ENCODE measurements at regions of chr11 and their contacts with region 1.

Region 1: DNA sequence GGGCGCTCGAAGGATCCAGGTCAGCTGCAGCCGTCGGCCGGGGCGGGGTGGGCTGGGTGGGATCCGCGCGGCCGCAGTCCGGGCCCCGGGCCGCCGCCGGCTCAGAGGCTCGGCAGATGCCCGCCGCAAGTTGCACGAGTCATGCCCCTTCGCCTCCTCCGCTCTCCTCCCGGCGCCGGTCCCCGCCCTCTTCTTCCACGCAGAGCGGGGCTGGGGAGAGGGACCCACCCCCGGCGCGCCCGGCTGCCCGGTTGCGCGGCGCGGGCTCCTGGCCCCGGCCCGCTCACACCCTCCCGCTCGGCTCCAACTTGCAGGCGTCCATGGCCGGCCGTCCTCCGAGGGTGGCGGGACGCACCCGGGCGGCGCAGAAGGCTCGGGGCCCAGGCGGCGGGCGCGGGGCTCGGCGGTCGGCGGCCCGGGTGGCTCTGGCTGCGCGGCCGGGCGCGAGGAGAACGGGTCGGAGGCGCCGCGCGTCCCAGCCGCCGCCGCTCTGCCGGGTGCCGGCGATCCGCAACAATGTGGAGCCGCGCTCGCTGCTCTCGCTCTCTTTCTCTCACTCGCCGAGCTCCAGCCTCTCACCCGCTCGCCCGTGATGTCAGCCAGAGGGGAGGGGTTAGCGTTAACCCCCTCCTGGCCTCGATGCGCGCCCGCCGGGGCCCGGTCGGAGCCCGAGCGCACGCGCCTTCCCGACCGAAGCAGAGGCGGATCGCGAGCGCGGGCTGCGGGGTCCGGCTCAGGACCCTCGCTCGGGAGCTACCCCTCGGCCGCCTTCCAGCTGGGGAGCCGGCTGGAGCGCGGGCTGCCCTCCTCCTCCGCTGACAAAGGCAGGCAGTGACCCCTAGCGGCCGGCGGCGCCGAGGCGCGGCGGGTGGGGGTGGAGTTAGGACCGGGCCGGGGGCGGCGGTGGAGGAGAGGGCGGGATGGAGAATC is at the start of gene NECTIN1:
- DNase-seq: peak; percentile 93
- ATAC-seq: peak; percentile 86
- H3K4me3 Mint-ChIP-seq: peak within 1 kb of the TSS; percentile 94
- H3K27ac Mint-ChIP-seq: peak within 1 kb of the TSS; percentile 79
- H3K4me1 Mint-ChIP-seq: peaks cover 38% of the 10 kb centered on the region
- H3K27me3 Mint-ChIP-seq: peaks cover 20% of the 10 kb centered on the region
- CTCF ChIP-seq: peak; percentile 49
- total RNA-seq, gene NECTIN1: 36.4 and 36.7 TPM in 2 replicates

Region 2: DNA sequence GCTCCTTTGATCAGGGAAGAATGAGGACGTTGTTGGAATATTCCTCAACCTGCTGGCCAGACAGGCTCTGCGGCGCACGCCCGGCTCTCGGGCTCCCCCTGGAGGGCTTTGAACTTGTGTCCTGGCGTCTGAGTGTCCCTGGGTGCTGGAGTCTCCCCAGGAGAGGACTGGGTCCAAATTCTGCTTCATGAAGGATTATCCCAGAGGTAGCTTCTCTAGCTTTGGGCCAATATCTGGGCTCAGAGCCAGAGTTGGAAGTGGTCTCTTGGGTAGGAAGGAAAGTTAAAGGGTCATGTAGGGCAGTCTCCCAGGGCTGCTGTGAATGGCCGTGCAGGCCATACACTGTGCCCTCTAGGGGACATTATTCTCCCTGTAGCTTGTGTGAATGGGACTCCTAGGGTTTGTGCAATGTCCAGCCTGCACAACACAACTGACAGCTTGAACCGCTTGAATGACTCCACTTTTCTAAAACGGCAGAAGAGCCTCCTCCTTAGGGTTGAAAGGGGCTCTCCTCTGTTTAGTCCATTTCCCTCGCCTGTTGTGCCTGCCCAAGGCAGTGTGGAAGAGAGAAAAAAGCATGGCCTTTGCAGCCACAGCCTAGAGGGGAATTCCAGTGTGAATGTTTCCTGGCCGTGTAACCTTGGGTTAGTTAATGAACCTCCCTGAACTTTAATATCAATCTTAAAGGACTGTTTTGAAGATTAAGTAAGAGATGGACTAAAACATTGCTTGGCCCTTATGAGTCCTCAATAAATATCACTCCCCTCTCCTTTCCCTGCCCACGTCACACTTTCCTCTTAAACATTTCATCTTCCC is 194.8 kb before region 1 on chr11:
- CTCF ChIA-PET with region 1: no interaction called
- POLR2A ChIA-PET with region 1: no interaction called
- intact Hi-C with region 1: loop called (anchors 5 kb)
- DNase-seq: peak; percentile 57
- ATAC-seq: peak; percentile 79
- H3K4me3 Mint-ChIP-seq: no peak overlapping the region
- H3K27ac Mint-ChIP-seq: no peak overlapping the region
- H3K4me1 Mint-ChIP-seq: no peaks in the 10 kb centered on the region
- H3K27me3 Mint-ChIP-seq: peaks cover 37% of the 10 kb centered on the region
- CTCF ChIP-seq: peak; percentile 61

Region 3: GRCh38 chr11:119641983-119642745 is 86.8 kb before region 1 on chr11:
- CTCF ChIA-PET with region 1: interaction called, 9 read pairs
- POLR2A ChIA-PET with region 1: no interaction called
- intact Hi-C with region 1: loop called (anchors 1 kb)
- DNase-seq: no peak
- ATAC-seq: no peak
- H3K4me3 Mint-ChIP-seq: no peak overlapping the region
- H3K27ac Mint-ChIP-seq: no peak overlapping the region
- H3K4me1 Mint-ChIP-seq: no peaks in the 10 kb centered on the region
- H3K27me3 Mint-ChIP-seq: peaks cover 6% of the 10 kb centered on the region
- CTCF ChIP-seq: no peak

Region 4: GRCh38 chr11:119673759-119674336 is 55.1 kb before region 1 on chr11:
- CTCF ChIA-PET with region 1: interaction called, 117 read pairs
- POLR2A ChIA-PET with region 1: interaction called, 58 read pairs
- intact Hi-C with region 1: loop called (anchors 1 kb)
- DNase-seq: peak; percentile 66
- ATAC-seq: peak; percentile 92
- H3K4me3 Mint-ChIP-seq: peak overlapping the region; percentile 78
- H3K27ac Mint-ChIP-seq: peak overlapping the region; percentile 91
- H3K4me1 Mint-ChIP-seq: peaks cover 31% of the 10 kb centered on the region
- H3K27me3 Mint-ChIP-seq: no peaks in the 10 kb centered on the region
- CTCF ChIP-seq: no peak

Region 5: GRCh38 chr11:119741369-119742262 is 12.7 kb after region 1 on chr11:
- CTCF ChIA-PET with region 1: interaction called, 12 read pairs
- POLR2A ChIA-PET with region 1: interaction called, 8 read pairs
- intact Hi-C with region 1: loop called (anchors 1 kb)
- DNase-seq: peak; percentile 67
- ATAC-seq: peak; percentile 88
- H3K4me3 Mint-ChIP-seq: peak overlapping the region; percentile 25
- H3K27ac Mint-ChIP-seq: no peak overlapping the region
- H3K4me1 Mint-ChIP-seq: peaks cover 10% of the 10 kb centered on the region
- H3K27me3 Mint-ChIP-seq: peaks cover 51% of the 10 kb centered on the region
- CTCF ChIP-seq: no peak

Region 6: DNA sequence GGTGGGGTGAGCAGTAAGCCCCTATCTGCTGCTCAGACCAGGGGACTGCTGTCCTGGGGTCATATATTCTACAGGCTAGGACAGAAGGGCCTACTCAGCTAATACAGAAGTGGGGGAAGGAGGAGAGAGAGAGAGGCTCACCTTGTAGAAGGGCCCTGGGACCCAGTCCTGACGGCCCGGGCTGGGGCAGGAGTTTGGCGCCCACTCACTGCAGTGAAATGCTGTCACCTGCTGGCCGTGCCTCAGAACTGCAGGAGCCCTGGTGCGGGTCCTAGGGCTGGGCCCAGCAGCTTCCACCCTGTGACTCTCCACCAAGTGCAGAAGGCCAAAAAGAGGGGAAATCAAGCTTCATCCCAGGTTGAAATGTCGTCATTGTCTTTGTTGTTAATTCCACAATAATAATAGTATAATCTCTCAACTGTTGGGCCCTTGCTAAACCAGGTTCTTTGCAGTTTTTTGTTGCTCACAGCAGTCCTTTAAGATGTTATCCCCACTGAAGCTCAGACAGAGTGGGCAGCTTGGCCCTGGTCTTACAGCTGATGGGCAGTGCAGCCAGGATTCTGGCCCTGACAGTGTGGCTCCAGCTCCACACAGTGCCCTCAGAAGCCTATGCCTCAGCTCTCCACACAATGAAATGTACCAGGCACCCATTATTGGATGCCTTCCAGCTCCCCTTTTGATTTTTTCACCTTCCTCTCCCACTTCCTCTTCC is 379.4 kb after region 1 on chr11:
- CTCF ChIA-PET with region 1: interaction called, 7 read pairs
- POLR2A ChIA-PET with region 1: no interaction called
- intact Hi-C with region 1: loop called (anchors 2 kb)
- DNase-seq: peak; percentile 59
- ATAC-seq: peak; percentile 86
- H3K4me3 Mint-ChIP-seq: no peak overlapping the region
- H3K27ac Mint-ChIP-seq: no peak overlapping the region
- H3K4me1 Mint-ChIP-seq: no peaks in the 10 kb centered on the region
- H3K27me3 Mint-ChIP-seq: peaks cover 21% of the 10 kb centered on the region
- CTCF ChIP-seq: no peak

Measured in activated B cell treated with CpG ODN at 0.5 μM for 24 hours (primary cell).